ENCODE measurements at regions of chr7 and their contacts with region 1.

Region 1: DNA sequence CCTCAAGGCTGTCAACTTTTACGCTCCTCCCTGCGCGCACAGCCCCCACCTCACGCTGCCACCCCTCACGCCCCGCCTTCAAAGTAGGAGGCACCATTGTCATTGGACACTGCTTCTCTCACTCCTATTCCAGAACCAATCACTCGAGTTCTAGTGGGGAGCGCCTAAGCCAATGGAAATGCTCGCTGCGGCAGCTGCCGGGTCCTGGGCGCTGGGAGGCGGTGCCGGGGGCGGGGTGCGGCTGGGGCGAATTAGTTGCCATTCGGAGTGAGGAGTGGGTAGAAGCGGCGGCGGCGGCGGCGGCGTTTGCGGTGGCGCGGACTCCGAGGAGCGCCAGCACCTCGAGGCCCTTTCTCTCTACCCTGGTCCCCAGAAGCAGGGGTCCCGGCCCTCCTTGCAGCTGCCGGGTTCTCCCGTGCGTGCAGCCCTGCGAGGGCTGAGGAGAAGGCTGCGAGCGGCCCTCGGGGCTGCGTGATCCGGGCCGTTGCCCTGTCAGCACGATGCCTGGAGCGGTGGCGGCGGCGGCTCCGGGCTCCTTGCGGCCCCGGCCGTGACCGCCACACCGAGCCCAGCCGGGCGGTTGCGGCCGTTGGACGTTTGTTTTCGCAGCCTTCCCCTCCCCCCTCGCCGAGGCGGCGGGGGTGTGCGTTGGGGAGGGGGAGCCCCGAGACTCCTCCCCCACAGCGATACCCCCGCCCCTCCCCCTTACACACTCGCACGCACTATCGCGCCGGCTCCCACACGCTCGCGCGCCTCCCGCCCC is at the start of gene GLCCI1:
- H3K4me3 Mint-ChIP-seq: peak within 1 kb of the TSS; percentile 86
- H3K27ac Mint-ChIP-seq: peak within 1 kb of the TSS; percentile 77
- H3K4me1 Mint-ChIP-seq: peaks cover 11% of the 10 kb centered on the region
- H3K27me3 Mint-ChIP-seq: peaks cover 1% of the 10 kb centered on the region

Region 2: GRCh38 chr7:7182156-7183060 is 786.3 kb before region 1 on chr7 and contains the start of gene C1GALT1:
- intact Hi-C with region 1: loop called (anchors 5 kb)
- H3K4me3 Mint-ChIP-seq: peak within 1 kb of the TSS; percentile 76
- H3K27ac Mint-ChIP-seq: peak within 1 kb of the TSS; percentile 98
- H3K4me1 Mint-ChIP-seq: peaks cover 14% of the 10 kb centered on the region
- H3K27me3 Mint-ChIP-seq: no peaks in the 10 kb centered on the region

Region 3: DNA sequence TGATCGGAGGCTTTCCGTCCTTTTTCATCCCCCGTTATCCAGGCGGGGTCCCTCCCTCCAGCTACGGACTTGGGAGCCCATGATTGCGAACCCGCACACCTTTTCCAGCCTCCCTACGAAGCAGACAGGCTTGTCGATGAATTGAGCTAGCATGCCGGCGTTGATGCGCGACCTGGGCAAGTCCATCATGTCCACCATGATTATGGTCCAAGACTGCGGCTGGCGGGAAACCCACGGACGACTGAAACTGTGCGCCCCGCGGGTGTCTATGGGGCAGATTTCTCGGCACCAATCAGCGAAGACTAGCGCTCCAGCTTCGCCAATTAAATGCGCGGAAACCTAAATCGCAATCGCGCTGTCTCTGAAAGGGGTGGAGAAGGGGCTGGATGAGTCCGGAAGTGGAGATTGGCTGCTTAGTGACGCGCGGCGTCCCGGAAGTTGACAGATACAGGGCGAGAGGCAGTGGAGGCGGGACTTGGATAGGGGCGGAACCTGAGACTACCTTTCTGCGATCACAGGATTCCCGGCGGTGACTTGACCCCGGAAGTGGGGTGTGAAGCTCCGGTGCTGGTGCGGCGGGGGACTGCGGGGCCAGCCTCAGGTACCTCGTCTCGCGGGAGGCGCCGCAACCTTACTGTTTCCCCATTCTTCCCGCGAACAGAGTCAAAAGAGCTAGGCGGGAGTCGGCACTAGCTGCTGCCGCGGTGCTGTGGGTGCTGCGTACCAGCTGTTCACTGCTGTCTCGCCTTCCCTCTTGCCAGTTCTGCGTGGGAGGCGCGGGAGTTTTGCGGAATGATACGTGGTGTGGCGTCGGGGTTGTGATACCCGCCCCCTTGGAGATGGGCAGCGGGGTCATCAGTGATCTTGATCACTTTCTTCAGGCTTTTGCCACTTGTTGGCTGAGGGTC is 328.2 kb before region 1 on chr7 and contains the start of gene UMAD1:
- intact Hi-C with region 1: loop called (anchors 2 kb)
- H3K4me3 Mint-ChIP-seq: peak within 1 kb of the TSS; percentile 94
- H3K27ac Mint-ChIP-seq: peak within 1 kb of the TSS; percentile 95
- H3K4me1 Mint-ChIP-seq: peaks cover 21% of the 10 kb centered on the region
- H3K27me3 Mint-ChIP-seq: no peaks in the 10 kb centered on the region

Region 4: GRCh38 chr7:7751243-7752092 is 217.3 kb before region 1 on chr7:
- intact Hi-C with region 1: loop called (anchors 10 kb)
- H3K4me3 Mint-ChIP-seq: no peak overlapping the region
- H3K27ac Mint-ChIP-seq: no peak overlapping the region
- H3K4me1 Mint-ChIP-seq: peaks cover under 1% of the 10 kb centered on the region
- H3K27me3 Mint-ChIP-seq: no peaks in the 10 kb centered on the region

Region 5: GRCh38 chr7:7867846-7868571 is 100.7 kb before region 1 on chr7:
- intact Hi-C with region 1: loop called (anchors 5 kb)
- H3K4me3 Mint-ChIP-seq: no peak overlapping the region
- H3K27ac Mint-ChIP-seq: no peak overlapping the region
- H3K4me1 Mint-ChIP-seq: peaks cover 5% of the 10 kb centered on the region
- H3K27me3 Mint-ChIP-seq: no peaks in the 10 kb centered on the region

Measured in dendritic cell treated with granulocyte-macrophage colony-stimulating factor and Interleukin-4, amounts not matched to agents 40 ng/mL and 50 ng/mL, for 4 days (primary cell).